Testis (tissue), 5 donors: ENCODE measurements at regions of chr6 and their contacts with region 1.

Region 1: GRCh38 chr6:134174672-134175198 is 122.3 kb upstream of the SLC2A12 start:
- DNase-seq: peak; percentile 96
- H3K4me3 ChIP-seq: peak overlapping the region; percentile 59 to 94
- H3K27ac ChIP-seq: peak overlapping the region; percentile 98
- H3K4me1 ChIP-seq: peaks cover 32% of the 10 kb centered on the region
- H3K27me3 ChIP-seq: no peaks in the 10 kb centered on the region
- CTCF ChIP-seq: peak in 2 of 3 experiments; percentile 2 to 3
- POLR2A ChIP-seq: peak; percentile 88

Region 2: DNA sequence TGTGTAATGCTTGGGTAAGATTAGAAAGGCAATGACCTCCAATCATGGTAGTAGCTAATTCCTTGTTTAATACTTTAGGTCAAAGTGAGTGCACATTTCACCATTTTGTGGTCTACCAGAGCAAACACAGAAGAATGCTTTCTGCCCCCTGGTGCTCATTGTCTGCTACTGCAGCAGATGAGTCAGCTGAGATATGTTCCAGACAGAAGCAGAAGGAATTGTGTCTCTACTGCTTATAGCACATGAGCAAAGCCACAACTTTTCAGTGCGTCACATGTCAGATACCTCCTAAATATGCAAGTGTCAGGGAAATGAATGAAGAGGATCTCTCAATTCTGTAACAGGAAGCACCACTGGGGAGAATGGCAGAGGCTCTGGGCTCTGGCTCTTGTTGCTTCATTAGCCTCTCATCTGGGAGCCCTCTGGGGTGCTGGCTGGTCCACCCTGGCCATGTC is 466.3 kb after region 1 on chr6:
- intact Hi-C with region 1: loop called (anchors 10 kb)
- DNase-seq: peak; percentile 89
- H3K4me3 ChIP-seq: no peak overlapping the region
- H3K27ac ChIP-seq: no peak overlapping the region
- H3K4me1 ChIP-seq: peaks cover 10% of the 10 kb centered on the region
- H3K27me3 ChIP-seq: no peaks in the 10 kb centered on the region
- CTCF ChIP-seq: peak; percentile 95 to 97 (median 96)
- POLR2A ChIP-seq: no peak

Region 3: GRCh38 chr6:134822920-134823709 is 648.4 kb after region 1 on chr6:
- intact Hi-C with region 1: loop called (anchors 5 kb)
- DNase-seq: peak; percentile 65
- H3K4me3 ChIP-seq: no peak overlapping the region
- H3K27ac ChIP-seq: no peak overlapping the region
- H3K4me1 ChIP-seq: peaks cover 11% of the 10 kb centered on the region
- H3K27me3 ChIP-seq: no peaks in the 10 kb centered on the region
- CTCF ChIP-seq: peak; percentile 78 to 94 (median 93)
- POLR2A ChIP-seq: no peak